ENCODE measurements at regions of chr22 and their contacts with region 1.

Region 1: DNA sequence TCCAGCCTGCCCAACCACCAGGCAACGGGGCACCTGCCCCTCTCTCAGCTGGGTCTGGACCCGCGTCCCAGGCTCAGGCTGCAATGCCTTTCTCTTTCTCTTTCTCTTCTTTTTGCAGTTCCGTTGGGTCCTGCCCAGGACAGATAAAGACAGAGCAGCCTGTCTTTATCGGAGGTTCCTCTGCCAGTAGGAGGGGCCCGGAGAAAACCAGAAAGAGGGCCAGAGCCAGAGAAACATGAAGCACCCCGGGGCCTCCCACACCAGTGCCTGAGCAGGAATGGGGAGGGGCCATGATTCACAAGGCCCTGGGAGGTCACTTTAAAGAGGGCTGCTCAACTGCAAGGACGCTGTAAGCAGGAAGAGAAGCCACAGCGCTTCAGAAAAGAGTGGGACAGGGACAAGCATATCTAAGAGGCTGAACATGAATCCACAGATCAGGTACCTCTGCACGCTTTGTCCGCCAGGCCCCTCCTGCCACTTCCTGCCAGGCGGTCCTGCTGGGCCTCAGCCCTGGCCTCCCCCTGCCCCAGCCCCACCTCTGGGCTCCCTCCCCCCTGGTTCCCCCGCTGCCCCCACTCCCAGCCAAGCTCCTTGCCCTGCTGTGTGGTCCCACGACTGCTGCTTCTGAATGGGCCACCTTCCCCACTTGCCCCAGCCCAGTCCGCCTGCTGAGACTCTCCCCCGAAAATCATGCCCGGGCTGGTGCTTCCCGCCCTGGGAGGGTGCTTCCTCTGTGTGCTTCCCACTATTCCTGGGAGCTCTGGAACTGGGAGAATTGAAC is at the start of gene APOBEC3C:
- DNase-seq: peak; percentile 85
- H3K4me3 ChIP-seq: peak within 1 kb of the TSS; percentile 38 to 39
- H3K27ac ChIP-seq: peak within 1 kb of the TSS; percentile 85 to 88
- H3K4me1 ChIP-seq: no peaks in the 10 kb centered on the region
- H3K27me3 ChIP-seq: no peaks in the 10 kb centered on the region
- CTCF ChIP-seq: peak in 1 of 4 experiments; percentile 32
- POLR2A ChIP-seq: peak; percentile 89
- total RNA-seq, gene APOBEC3C: 21.4 to 52.3 TPM

Region 2: GRCh38 chr22:38941488-38941987 is 72.6 kb before region 1 on chr22:
- intact Hi-C with region 1: no loop called
- DNase-seq: no peak
- H3K4me3 ChIP-seq: no peak overlapping the region
- H3K27ac ChIP-seq: no peak overlapping the region
- H3K4me1 ChIP-seq: no peaks in the 10 kb centered on the region
- H3K27me3 ChIP-seq: no peaks in the 10 kb centered on the region
- CTCF ChIP-seq: no peak
- POLR2A ChIP-seq: no peak

Region 3: GRCh38 chr22:39123751-39124601 is 109.8 kb after region 1 on chr22:
- intact Hi-C with region 1: loop called (anchors 10 kb)
- DNase-seq: no peak
- H3K4me3 ChIP-seq: no peak overlapping the region
- H3K27ac ChIP-seq: no peak overlapping the region
- H3K4me1 ChIP-seq: no peaks in the 10 kb centered on the region
- H3K27me3 ChIP-seq: no peaks in the 10 kb centered on the region
- CTCF ChIP-seq: no peak
- POLR2A ChIP-seq: no peak

Measured in prostate gland (tissue), 2 donors.